CD4-positive, alpha-beta memory T cell (primary cell): ENCODE measurements at regions of chr11 and their contacts with region 1.

Region 1: DNA sequence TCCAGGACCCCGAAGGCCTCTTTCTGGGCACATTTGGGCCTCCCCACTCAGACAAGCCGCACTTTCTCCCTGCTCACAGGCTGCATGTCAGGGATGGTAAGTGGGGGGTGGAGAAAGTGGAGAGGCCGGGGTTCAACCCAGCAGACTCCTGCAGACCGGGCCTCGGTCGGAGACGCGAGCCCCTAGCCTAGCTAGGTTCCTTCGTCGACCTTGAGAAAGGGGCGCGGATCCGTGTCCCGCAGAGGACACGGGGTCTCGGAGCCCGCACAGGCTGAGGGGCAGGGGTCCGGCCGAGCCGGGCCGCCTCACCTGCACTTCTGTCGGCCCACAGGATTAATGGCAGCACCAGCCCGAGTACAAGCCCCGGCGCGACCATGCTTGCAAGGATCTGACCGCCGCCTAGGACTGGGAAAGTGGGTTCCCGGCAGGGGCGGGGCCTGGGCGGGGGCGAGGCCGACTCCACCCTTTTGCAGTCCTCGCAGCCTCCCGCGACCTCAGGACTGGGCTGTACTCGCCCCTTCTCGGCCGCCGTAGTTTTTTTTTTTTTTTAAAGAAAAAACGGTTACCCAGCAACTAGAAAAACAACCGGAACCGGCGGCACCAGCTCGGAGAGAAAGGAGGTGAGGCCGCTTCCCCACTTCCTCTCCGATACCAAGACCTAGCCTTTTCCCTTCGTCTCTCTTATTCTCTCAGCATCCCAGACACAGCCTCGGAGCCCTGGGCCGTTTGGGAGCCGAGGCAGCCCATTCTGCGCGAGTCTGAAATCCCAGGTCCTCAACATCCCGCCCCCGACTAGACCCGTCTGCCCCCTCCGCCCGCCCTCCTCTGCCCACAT is at the starts of genes SIAE and SPA17:
- DNase-seq: peak; percentile 84 to 91 (median 88)
- H3K4me3 ChIP-seq: peak within 1 kb of the TSS; percentile 39 to 73
- H3K4me3 Mint-ChIP-seq: peak within 1 kb of the TSS; percentile 90 to 95 (median 91)
- H3K27ac ChIP-seq: peak within 1 kb of the TSS; percentile 66
- H3K27ac Mint-ChIP-seq: peak within 1 kb of the TSS; percentile 98 to 99 (median 99)
- H3K4me1 ChIP-seq: peaks cover 42% of the 10 kb centered on the region
- H3K4me1 Mint-ChIP-seq: peaks cover 16 to 43% (median 32%) of the 10 kb centered on the region in 4 donors
- H3K27me3 ChIP-seq: peaks cover 5% of the 10 kb centered on the region
- H3K27me3 Mint-ChIP-seq: no peaks in the 10 kb centered on the region
- total RNA-seq, gene SIAE: 4.2 to 4.8 TPM
- total RNA-seq, gene SPA17: 0.55 to 0.81 TPM

Region 2: GRCh38 chr11:124622531-124623451 is 50.8 kb before region 1 on chr11 and contains the start of gene TBRG1:
- CTCF ChIA-PET with region 1: no interaction called
- POLR2A ChIA-PET with region 1: interaction called, 8 read pairs
- intact Hi-C with region 1: loop called (anchors 1 kb)
- DNase-seq: peak; percentile 76 to 88 (median 82)
- H3K4me3 ChIP-seq: peak within 1 kb of the TSS; percentile 63 to 86
- H3K4me3 Mint-ChIP-seq: peak within 1 kb of the TSS; percentile 93 to 100 (median 98)
- H3K27ac ChIP-seq: peak within 1 kb of the TSS; percentile 95
- H3K27ac Mint-ChIP-seq: peak within 1 kb of the TSS; percentile 92 to 100 (median 99)
- H3K4me1 ChIP-seq: peaks cover 34% of the 10 kb centered on the region
- H3K4me1 Mint-ChIP-seq: peaks cover 23 to 53% (median 38%) of the 10 kb centered on the region in 4 donors
- H3K27me3 ChIP-seq: no peaks in the 10 kb centered on the region
- H3K27me3 Mint-ChIP-seq: peaks cover 1 to 6% of the 10 kb centered on the region in 2 donors
- total RNA-seq, gene TBRG1: 69.3 to 75.8 TPM

Region 3: GRCh38 chr11:124739479-124740276 is 66.1 kb after region 1 on chr11 and contains the start of gene NRGN:
- CTCF ChIA-PET with region 1: interaction called, 69 read pairs
- POLR2A ChIA-PET with region 1: interaction called, 40 read pairs
- intact Hi-C with region 1: loop called (anchors 1 kb)
- DNase-seq: peak; percentile 73 to 81 (median 76)
- H3K4me3 ChIP-seq: peak within 1 kb of the TSS; percentile 39 to 60
- H3K4me3 Mint-ChIP-seq: peak within 1 kb of the TSS; percentile 83 to 94 (median 86)
- H3K27ac ChIP-seq: no peak within 1 kb of the TSS
- H3K27ac Mint-ChIP-seq: peak within 1 kb of the TSS; percentile 38 to 80 (median 62)
- H3K4me1 ChIP-seq: peaks cover 17% of the 10 kb centered on the region
- H3K4me1 Mint-ChIP-seq: peaks cover 3 to 20% (median 16%) of the 10 kb centered on the region in 4 donors
- H3K27me3 ChIP-seq: peaks cover 5% of the 10 kb centered on the region
- H3K27me3 Mint-ChIP-seq: peaks cover 0 to 3% of the 10 kb centered on the region in 2 donors
- total RNA-seq, gene NRGN: 0.67 TPM in 1 of 2 experiments, not detected in the other

Region 4: DNA sequence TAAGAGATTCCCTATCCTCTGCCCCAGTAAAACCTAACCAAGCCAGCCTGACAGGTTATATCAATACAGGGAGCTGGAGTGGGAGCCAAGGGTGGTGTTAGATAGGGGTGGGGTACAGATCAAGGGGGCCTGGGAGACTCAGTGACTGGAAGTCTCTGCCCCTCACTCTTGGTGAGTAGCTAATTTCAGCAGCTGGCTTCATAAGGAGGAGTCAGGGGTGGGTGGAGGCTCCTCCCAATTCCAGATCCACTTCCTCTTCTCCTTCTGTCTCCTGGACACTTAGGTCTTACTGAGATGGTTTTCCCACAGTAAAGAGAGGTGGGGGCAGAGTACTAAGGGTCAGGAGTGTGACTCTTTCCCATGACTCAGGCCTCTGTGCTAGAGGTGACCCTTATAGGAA is 79.7 kb after region 1 on chr11:
- CTCF ChIA-PET with region 1: interaction called, 69 read pairs
- POLR2A ChIA-PET with region 1: interaction called, 7 read pairs
- intact Hi-C with region 1: no loop called
- DNase-seq: no peak
- H3K4me3 ChIP-seq: no peak overlapping the region
- H3K4me3 Mint-ChIP-seq: no peak overlapping the region
- H3K27ac ChIP-seq: no peak overlapping the region
- H3K27ac Mint-ChIP-seq: no peak overlapping the region
- H3K4me1 ChIP-seq: peaks cover 3% of the 10 kb centered on the region
- H3K4me1 Mint-ChIP-seq: peaks cover 1 to 26% (median 3%) of the 10 kb centered on the region in 4 donors
- H3K27me3 ChIP-seq: no peaks in the 10 kb centered on the region
- H3K27me3 Mint-ChIP-seq: peaks cover 18 to 20% of the 10 kb centered on the region in 2 donors

Region 5: GRCh38 chr11:124800226-124800929 is 126.8 kb after region 1 on chr11 and contains the start of gene MSANTD2:
- CTCF ChIA-PET with region 1: interaction called, 60 read pairs
- POLR2A ChIA-PET with region 1: interaction called, 25 read pairs
- intact Hi-C with region 1: loop called (anchors 1 kb)
- DNase-seq: peak; percentile 77 to 84 (median 79)
- H3K4me3 ChIP-seq: peak within 1 kb of the TSS; percentile 66 to 93
- H3K4me3 Mint-ChIP-seq: peak within 1 kb of the TSS; percentile 93 to 98 (median 96)
- H3K27ac ChIP-seq: peak within 1 kb of the TSS; percentile 78
- H3K27ac Mint-ChIP-seq: peak within 1 kb of the TSS; percentile 90 to 98 (median 97)
- H3K4me1 ChIP-seq: peaks cover 28% of the 10 kb centered on the region
- H3K4me1 Mint-ChIP-seq: peaks cover 18 to 40% (median 26%) of the 10 kb centered on the region in 4 donors
- H3K27me3 ChIP-seq: no peaks in the 10 kb centered on the region
- H3K27me3 Mint-ChIP-seq: peaks cover 0 to 2% of the 10 kb centered on the region in 2 donors
- total RNA-seq, gene MSANTD2: 25.9 to 26.3 TPM

Region 6: GRCh38 chr11:126062679-126063506 is 1389.3 kb after region 1 on chr11 and contains the start of gene CDON:
- CTCF ChIA-PET with region 1: no interaction called
- POLR2A ChIA-PET with region 1: no interaction called
- intact Hi-C with region 1: loop called (anchors 5 kb)
- DNase-seq: peak; percentile 88 to 95 (median 93)
- H3K4me3 ChIP-seq: peak within 1 kb of the TSS; percentile 47 to 76
- H3K4me3 Mint-ChIP-seq: peak within 1 kb of the TSS; percentile 86 to 96 (median 90)
- H3K27ac ChIP-seq: peak within 1 kb of the TSS; percentile 73
- H3K27ac Mint-ChIP-seq: peak within 1 kb of the TSS; percentile 84 to 99 (median 96)
- H3K4me1 ChIP-seq: peaks cover 14% of the 10 kb centered on the region
- H3K4me1 Mint-ChIP-seq: peaks cover 5 to 14% (median 9%) of the 10 kb centered on the region in 4 donors
- H3K27me3 ChIP-seq: no peaks in the 10 kb centered on the region
- H3K27me3 Mint-ChIP-seq: peaks cover 0 to 2% of the 10 kb centered on the region in 2 donors
- total RNA-seq, gene CDON: 2.7 to 3.1 TPM